ENCODE measurements at regions of chr15 and their contacts with region 1.

Region 1: DNA sequence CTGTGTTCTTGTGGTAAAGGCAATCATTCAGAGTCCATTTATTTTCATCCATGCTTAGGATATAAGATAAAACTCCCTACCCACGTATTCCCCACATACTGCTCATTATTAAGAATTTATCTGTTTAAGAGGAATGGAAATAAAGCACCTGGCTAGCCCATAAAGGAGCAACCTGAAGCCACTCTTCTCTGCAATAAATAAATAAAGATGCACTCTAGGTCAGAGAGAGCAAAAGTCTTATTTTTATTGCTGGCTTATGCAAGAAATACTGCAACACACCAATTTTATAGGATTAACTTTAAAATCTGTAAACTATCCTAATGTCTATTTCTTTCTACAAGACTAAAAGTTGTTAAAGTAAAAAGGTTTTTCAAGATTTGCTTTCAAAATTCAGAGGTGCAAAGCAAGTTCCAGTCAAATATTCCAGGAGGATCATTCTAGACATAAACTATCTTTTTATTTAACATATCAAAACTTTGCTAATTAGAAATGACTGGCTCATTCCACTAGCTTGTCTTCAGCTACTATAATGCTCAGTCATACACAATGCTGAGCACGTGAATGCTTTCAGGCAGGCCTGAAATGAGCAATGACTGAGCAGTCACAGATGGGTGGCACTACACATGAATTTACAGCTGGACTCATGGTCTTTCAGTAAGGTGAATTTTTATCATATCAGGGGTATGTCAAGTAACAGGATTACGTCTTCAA is 7.1 kb downstream of the TJP1 start:
- DNase-seq: no peak
- ATAC-seq: peak; percentile 62 to 88 (median 82)
- H3K4me3 ChIP-seq: no peak overlapping the region
- H3K27ac ChIP-seq: peak overlapping the region in 5 of 12 donors; percentile 2 to 44 (median 12)
- H3K4me1 ChIP-seq: peaks cover 6 to 88% (median 56%) of the 10 kb centered on the region in 12 donors
- H3K27me3 ChIP-seq: peaks cover 0 to 15% (median 0%) of the 10 kb centered on the region in 9 donors
- CTCF ChIP-seq: peak in 1 of 12 donors; percentile 16
- POLR2A ChIP-seq: no peak

Region 2: DNA sequence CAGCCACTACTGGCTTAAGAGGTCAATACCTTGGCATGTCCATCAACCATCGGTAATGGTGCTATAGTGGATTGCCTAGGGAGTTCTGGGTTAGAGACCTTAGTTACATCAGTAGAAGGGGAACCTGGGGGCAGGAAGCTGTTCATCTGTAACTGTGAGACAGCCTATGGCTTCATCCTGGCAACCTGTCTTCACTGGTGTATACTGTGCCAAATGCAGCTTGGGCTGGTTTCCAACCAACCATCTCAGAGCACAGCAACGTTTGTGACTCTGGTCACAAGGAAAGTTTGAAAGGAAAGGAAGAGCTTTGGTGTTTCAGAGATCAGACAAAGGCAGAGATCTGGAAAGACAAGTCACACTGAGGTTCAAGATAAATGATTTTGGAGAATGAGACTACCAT is 86.7 kb before region 1 on chr15:
- intact Hi-C with region 1: no loop called
- DNase-seq: no peak
- ATAC-seq: peak in 3 of 4 donors; percentile 56 to 67 (median 65)
- H3K4me3 ChIP-seq: no peak overlapping the region
- H3K27ac ChIP-seq: no peak overlapping the region
- H3K4me1 ChIP-seq: peaks cover 0 to 16% (median 0%) of the 10 kb centered on the region in 12 donors
- H3K27me3 ChIP-seq: no peaks in the 10 kb centered on the region
- CTCF ChIP-seq: no peak
- POLR2A ChIP-seq: no peak

Region 3: GRCh38 chr15:29747837-29748417 is 67.2 kb before region 1 on chr15:
- intact Hi-C with region 1: loop called in 3 of 10 experiments (anchors 5 kb)
- DNase-seq: no peak
- ATAC-seq: no peak
- H3K4me3 ChIP-seq: no peak overlapping the region
- H3K27ac ChIP-seq: no peak overlapping the region
- H3K4me1 ChIP-seq: peaks cover 0 to 15% (median 6%) of the 10 kb centered on the region in 12 donors
- H3K27me3 ChIP-seq: no peaks in the 10 kb centered on the region
- CTCF ChIP-seq: peak in 11 of 12 donors; percentile 26 to 67 (median 50)
- POLR2A ChIP-seq: no peak

Region 4: DNA sequence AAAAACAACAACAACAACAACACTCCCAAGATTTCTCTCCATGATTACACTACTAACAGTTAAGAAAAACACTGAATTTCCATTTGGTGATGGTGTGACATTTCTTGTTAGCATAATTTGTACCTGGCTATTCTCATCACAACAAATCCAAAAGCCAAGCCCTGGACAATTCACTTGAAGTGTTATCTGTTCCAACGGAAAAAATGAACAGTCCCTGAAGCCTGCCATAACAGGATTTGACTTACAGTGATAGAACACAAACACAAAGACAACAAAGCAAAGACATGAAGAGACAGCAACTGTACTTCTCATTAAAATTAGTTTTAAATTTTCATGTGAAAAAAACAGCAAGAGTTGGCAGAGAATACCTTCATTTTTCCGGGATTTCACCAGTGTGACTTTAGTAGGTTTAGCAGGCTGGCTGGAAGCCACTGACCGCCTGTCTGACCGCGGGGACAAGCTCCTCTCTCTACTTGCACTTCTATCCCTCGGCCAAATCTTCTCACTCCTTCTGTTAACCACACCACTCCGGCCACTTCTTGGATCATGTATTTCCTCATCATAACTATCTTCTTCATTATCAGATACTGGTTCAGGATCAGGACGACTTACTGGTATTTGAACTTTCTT is 49.1 kb before region 1 on chr15:
- intact Hi-C with region 1: loop called in 4 of 10 experiments (anchors 5 to 10 kb)
- DNase-seq: peak in 3 of 5 donors; percentile 25 to 34 (median 25)
- ATAC-seq: peak; percentile 33 to 86 (median 61)
- H3K4me3 ChIP-seq: no peak overlapping the region
- H3K27ac ChIP-seq: peak overlapping the region in 4 of 12 donors; percentile 13 to 42 (median 32)
- H3K4me1 ChIP-seq: peaks cover 0 to 38% (median 27%) of the 10 kb centered on the region in 12 donors
- H3K27me3 ChIP-seq: no peaks in the 10 kb centered on the region
- CTCF ChIP-seq: no peak
- POLR2A ChIP-seq: no peak

Region 5: DNA sequence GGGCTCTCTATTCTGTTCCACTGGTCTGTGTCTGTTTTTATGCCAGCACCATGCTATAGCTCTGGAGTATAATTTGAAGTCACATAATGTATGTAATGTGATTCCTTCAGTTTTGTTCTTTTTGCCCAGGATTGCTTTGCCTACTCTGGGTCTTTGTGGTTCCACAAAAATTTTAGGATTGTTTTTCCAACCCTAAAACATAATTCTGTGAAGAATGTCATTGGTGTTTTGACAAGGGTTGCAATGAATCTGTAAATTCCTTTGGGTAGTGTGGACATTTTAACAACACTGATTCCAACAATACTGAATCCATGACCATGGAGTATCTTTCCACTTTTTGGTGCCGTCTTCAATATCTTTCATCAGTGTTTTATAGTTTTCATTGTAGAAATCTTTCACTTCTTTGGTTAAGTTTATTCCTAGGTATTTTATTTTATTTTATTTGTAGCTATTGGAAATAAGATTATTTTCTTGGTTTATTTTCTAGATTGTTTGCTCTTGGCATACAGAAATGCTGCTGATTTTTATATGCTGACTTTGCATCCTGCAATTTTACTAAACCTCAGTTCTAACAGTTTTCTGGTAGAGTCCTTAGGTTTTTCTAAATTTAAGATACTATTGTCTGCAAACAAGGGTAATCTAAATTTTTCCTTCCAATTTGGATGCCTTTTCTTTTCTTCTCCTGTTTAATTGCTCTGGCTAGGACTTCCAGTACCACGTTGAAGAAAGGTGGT is 22.6 kb before region 1 on chr15:
- intact Hi-C with region 1: loop called in 1 of 10 experiments (anchors 2 kb)
- DNase-seq: no peak
- ATAC-seq: no peak
- H3K4me3 ChIP-seq: no peak overlapping the region
- H3K27ac ChIP-seq: no peak overlapping the region
- H3K4me1 ChIP-seq: peaks cover 0 to 41% (median 17%) of the 10 kb centered on the region in 12 donors
- H3K27me3 ChIP-seq: no peaks in the 10 kb centered on the region
- CTCF ChIP-seq: no peak
- POLR2A ChIP-seq: no peak

Region 6: GRCh38 chr15:29799859-29800258 is 15.3 kb before region 1 on chr15:
- intact Hi-C with region 1: loop called in 1 of 10 experiments (anchors 2 kb)
- DNase-seq: no peak
- ATAC-seq: no peak
- H3K4me3 ChIP-seq: peak overlapping the region in 6 of 12 donors; percentile 9 to 48 (median 38)
- H3K27ac ChIP-seq: peak overlapping the region in 11 of 12 donors; percentile 35 to 74 (median 66)
- H3K4me1 ChIP-seq: peaks cover 8 to 58% (median 44%) of the 10 kb centered on the region in 12 donors
- H3K27me3 ChIP-seq: no peaks in the 10 kb centered on the region
- CTCF ChIP-seq: no peak
- POLR2A ChIP-seq: no peak

Region 7: GRCh38 chr15:29913528-29914135 is 98.5 kb after region 1 on chr15:
- intact Hi-C with region 1: loop called in 5 of 10 experiments (anchors 5 to 10 kb)
- DNase-seq: no peak
- ATAC-seq: peak; percentile 38 to 65 (median 50)
- H3K4me3 ChIP-seq: peak overlapping the region in 2 of 12 donors; percentile 2 to 8
- H3K27ac ChIP-seq: peak overlapping the region; percentile 11 to 81 (median 63)
- H3K4me1 ChIP-seq: peaks cover 0 to 56% (median 30%) of the 10 kb centered on the region in 12 donors
- H3K27me3 ChIP-seq: no peaks in the 10 kb centered on the region
- CTCF ChIP-seq: no peak
- POLR2A ChIP-seq: no peak

Measured in heart left ventricle (tissue), 16 donors.